PC-3 (cell line): ENCODE measurements at regions of chr2 and their contacts with region 1.

Region 1: GRCh38 chr2:197705121-197705911 is at the start of gene MARS2:
- DNase-seq: peak; percentile 93
- ATAC-seq: peak; percentile 78
- H3K4me3 ChIP-seq: peak within 1 kb of the TSS; percentile 91
- H3K27ac ChIP-seq: peak within 1 kb of the TSS; percentile 34
- H3K4me1 ChIP-seq: peaks cover 14% of the 10 kb centered on the region
- H3K27me3 ChIP-seq: no peaks in the 10 kb centered on the region
- CTCF ChIP-seq: no peak
- total RNA-seq, gene MARS2: 7.8 and 8.3 TPM in 2 replicates

Region 2: GRCh38 chr2:197434541-197435513 is 270.5 kb before region 1 on chr2 and contains the start of gene SF3B1:
- CTCF ChIA-PET with region 1: no interaction called
- POLR2A ChIA-PET with region 1: no interaction called
- intact Hi-C with region 1: loop called (anchors 10 kb)
- DNase-seq: peak; percentile 98
- ATAC-seq: peak; percentile 91
- H3K4me3 ChIP-seq: peak within 1 kb of the TSS; percentile 81
- H3K27ac ChIP-seq: peak within 1 kb of the TSS; percentile 76
- H3K4me1 ChIP-seq: peaks cover 23% of the 10 kb centered on the region
- H3K27me3 ChIP-seq: no peaks in the 10 kb centered on the region
- CTCF ChIP-seq: no peak
- total RNA-seq, gene SF3B1: 125 and 143 TPM in 2 replicates

Region 3: DNA sequence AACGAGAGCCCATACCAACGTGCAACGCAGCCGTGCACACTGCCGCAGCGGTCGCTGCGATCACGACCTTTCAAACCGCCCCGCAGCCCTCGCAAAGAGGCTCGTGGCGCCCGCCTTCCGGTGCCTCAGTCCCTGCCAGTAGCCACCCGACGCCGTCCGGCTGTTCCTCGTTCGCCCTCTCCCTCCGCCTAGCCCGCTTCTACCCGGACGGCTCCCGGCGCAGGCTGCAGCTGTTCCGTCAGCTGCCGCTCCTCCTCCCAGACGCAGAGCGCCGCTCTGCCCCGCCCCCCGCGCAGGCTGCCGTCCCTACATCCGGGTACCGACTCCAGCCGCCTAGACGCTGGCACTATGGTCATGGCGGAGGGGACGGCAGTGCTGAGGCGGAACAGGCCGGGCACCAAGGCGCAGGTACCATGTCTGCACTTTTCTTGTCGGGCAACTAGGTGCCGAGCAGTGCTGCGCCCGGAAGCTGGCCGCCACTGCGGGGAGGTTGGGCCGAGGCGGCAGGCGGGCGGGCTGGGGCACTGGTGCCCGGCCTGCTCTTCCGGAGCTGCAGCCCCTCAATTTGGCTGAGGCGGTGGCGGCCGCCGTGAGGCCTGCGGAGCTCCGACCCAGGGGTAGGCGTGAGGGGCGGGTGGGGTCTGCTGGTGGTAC is 189.4 kb before region 1 on chr2 and contains the start of gene MOB4:
- CTCF ChIA-PET with region 1: no interaction called
- POLR2A ChIA-PET with region 1: no interaction called
- intact Hi-C with region 1: loop called (anchors 5 kb)
- DNase-seq: peak; percentile 95
- ATAC-seq: peak; percentile 92
- H3K4me3 ChIP-seq: peak within 1 kb of the TSS; percentile 89
- H3K27ac ChIP-seq: peak within 1 kb of the TSS; percentile 48
- H3K4me1 ChIP-seq: peaks cover 17% of the 10 kb centered on the region
- H3K27me3 ChIP-seq: no peaks in the 10 kb centered on the region
- CTCF ChIP-seq: no peak
- total RNA-seq, gene MOB4: 16.8 and 24.9 TPM in 2 replicates

Region 4: DNA sequence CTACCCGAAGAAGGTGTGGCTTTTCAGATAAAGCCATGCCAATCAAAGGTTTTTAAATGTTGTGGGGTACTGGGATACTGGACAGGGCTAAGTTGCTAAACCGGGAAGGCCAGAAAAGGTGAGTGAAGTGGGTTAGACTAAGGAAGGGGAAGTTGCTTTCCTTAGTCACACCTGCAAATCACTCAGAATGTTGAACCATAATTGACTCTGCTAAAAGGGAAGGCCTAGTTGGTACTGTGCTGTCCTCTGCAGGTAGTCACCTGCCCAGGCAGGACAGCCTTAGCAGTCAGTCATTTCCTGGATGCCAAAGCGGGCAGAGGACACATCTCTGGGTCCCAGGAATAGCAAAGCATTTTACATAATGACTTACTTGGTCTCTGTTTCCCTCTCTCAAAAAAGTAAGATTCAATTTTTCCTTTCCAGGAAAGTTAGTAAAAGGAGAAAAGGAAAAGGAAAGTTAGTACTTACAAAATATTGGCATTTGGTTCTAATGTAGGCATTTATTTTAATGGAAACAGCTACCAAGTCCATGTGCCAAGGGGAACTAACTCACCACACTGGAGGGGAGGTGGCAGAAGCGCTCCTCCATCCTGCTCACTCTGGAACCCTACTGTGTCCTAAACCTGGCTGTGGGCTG is 90.2 kb before region 1 on chr2:
- CTCF ChIA-PET with region 1: no interaction called
- POLR2A ChIA-PET with region 1: no interaction called
- intact Hi-C with region 1: loop called (anchors 5 kb)
- DNase-seq: peak; percentile 78
- ATAC-seq: peak; percentile 76
- H3K4me3 ChIP-seq: no peak overlapping the region; the same call in 1 of the 2 replicates
- H3K27ac ChIP-seq: peak overlapping the region; percentile 28
- H3K4me1 ChIP-seq: peaks cover 33% of the 10 kb centered on the region
- H3K27me3 ChIP-seq: no peaks in the 10 kb centered on the region
- CTCF ChIP-seq: peak; percentile 73

Region 5: GRCh38 chr2:197821550-197822289 is 116.4 kb after region 1 on chr2:
- CTCF ChIA-PET with region 1: no interaction called
- POLR2A ChIA-PET with region 1: no interaction called
- intact Hi-C with region 1: no loop called
- DNase-seq: no peak
- ATAC-seq: no peak
- H3K4me3 ChIP-seq: no peak overlapping the region
- H3K27ac ChIP-seq: no peak overlapping the region
- H3K4me1 ChIP-seq: no peaks in the 10 kb centered on the region
- H3K27me3 ChIP-seq: peaks cover 25% of the 10 kb centered on the region
- CTCF ChIP-seq: no peak

Region 6: GRCh38 chr2:197857476-197858107 is 152.3 kb after region 1 on chr2:
- CTCF ChIA-PET with region 1: no interaction called
- POLR2A ChIA-PET with region 1: no interaction called
- intact Hi-C with region 1: no loop called
- DNase-seq: no peak
- ATAC-seq: no peak
- H3K4me3 ChIP-seq: no peak overlapping the region
- H3K27ac ChIP-seq: no peak overlapping the region
- H3K4me1 ChIP-seq: no peaks in the 10 kb centered on the region
- H3K27me3 ChIP-seq: peaks cover 5% of the 10 kb centered on the region; the same call in 1 of the 2 replicates
- CTCF ChIP-seq: no peak